HCT116 (cell line): ENCODE measurements at regions of chr12 and their contacts with region 1.

Region 1: GRCh38 chr12:7018350-7019042 is at the start of gene LPCAT3:
- DNase-seq: peak; percentile 90
- ATAC-seq: peak; percentile 92
- H3K4me3 ChIP-seq: peak within 1 kb of the TSS; percentile 89 to 96
- H3K27ac ChIP-seq: peak within 1 kb of the TSS; percentile 93
- H3K4me1 ChIP-seq: peaks cover 14 to 32% of the 10 kb centered on the region in 2 experiments
- H3K27me3 ChIP-seq: no peaks in the 10 kb centered on the region
- CTCF ChIP-seq: peak; percentile 65 to 74 (median 69)
- POLR2A ChIP-seq: no peak
- RAD21 ChIP-seq: peak; percentile 70
- total RNA-seq, gene LPCAT3: 45.8 TPM

Region 2: DNA sequence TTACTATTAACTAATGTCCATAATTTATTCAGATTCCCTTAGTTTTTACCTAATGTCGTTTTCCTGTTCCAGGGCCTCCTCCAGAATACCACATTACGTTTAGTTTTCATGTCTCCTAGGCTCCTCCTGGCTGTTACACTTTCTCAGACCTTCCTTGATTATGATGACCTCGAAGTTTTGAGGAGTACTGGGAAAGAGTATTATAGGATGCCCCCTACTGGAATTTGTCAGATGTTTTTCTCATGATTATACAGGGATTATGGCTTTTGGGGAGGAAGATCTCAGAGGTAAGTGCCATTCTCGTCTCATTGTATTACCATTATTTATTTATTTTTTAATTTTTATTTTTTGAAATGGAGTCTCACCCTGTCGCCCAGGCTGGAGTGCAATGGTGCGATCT is 24.3 kb after region 1 on chr12:
- CTCF ChIA-PET with region 1: no interaction called
- POLR2A ChIA-PET with region 1: no interaction called
- RAD21 ChIA-PET with region 1: no interaction called
- intact Hi-C with region 1: loop called (anchors 2 kb)
- DNase-seq: peak; percentile 56
- ATAC-seq: peak; percentile 95
- H3K4me3 ChIP-seq: no peak overlapping the region
- H3K27ac ChIP-seq: no peak overlapping the region
- H3K4me1 ChIP-seq: peaks cover 0 to 9% of the 10 kb centered on the region in 2 experiments; a peak in 1 of 4 replicates
- H3K27me3 ChIP-seq: no peaks in the 10 kb centered on the region
- CTCF ChIP-seq: peak; percentile 43 to 89 (median 63); a peak in 5 of 6 replicates
- POLR2A ChIP-seq: no peak
- RAD21 ChIP-seq: peak; percentile 83

Region 3: DNA sequence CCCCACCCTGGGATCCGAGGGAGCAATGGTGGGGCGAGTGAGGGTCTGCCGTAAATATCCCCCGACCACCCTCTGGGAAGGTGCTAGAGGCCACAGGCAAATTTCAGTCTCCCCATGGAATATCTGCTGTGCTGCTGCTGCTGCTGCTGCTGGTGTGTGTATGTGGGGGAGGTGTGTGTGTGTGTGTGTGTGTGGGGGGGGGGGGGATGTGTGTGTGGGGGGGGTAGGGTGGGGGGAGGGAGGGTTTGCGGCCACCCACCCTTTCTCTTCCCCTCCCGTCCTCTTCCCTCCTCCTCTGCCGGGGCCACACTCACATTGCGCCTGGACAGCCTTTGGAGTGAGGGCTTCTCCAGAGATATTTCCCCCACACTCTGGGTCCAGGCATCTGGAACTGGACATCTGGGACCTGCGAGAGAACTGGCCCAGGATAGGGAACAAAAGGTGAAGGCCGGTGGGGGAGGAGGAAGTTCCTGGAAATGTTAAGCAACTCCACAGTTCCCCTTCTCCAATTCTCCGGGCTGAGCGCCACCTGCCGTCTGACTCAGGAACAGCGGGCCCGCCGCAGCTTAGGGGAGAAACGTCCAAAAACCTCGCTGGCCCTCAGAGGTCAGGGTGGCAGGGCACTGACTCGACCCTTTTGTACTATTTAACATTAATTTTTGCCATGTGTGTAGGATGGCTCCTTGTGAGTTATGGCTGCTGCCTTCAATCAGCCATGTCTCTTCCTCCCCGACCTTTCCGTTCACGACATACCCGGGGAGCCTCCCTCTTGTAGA is 90.5 kb after region 1 on chr12 and contains the start of gene C1RL:
- CTCF ChIA-PET with region 1: no interaction called
- POLR2A ChIA-PET with region 1: interaction called, 3 read pairs
- RAD21 ChIA-PET with region 1: no interaction called
- intact Hi-C with region 1: loop called (anchors 2 kb)
- DNase-seq: peak; percentile 50
- ATAC-seq: peak; percentile 69
- H3K4me3 ChIP-seq: peak within 1 kb of the TSS; percentile 85 to 86
- H3K27ac ChIP-seq: peak within 1 kb of the TSS; percentile 88
- H3K4me1 ChIP-seq: peaks cover 4 to 16% of the 10 kb centered on the region in 2 experiments; a peak in 3 of 4 replicates
- H3K27me3 ChIP-seq: no peaks in the 10 kb centered on the region
- CTCF ChIP-seq: peak; percentile 69 to 96 (median 95); a peak in 5 of 6 replicates
- POLR2A ChIP-seq: no peak
- RAD21 ChIP-seq: peak; percentile 71
- total RNA-seq, gene C1RL: 25.9 TPM